IMR-90 (cell line): ENCODE measurements at regions of chr5 and their contacts with region 1.

Region 1: DNA sequence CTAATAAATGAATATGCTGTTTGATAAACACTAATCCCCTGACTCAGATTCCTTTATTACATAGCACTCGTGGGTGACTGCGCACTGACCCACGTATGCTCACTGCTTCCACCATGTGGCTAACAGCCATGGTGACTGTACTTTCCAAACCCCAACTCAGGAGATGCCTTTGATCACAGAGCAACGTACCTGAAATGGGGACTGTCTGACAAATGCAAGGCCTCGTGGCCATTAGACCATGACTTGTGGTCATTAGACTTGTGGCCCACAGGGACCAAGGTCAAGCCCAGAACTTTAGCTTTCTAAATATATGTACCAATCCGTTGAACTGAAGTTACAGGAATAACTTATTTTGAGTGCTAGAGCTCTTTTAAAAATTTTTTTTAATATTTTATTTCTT is 46.6 kb downstream of the CYFIP2 start:
- DNase-seq: peak; percentile 72
- ATAC-seq: peak; percentile 98
- H3K4me3 ChIP-seq: no peak overlapping the region
- H3K27ac ChIP-seq: no peak overlapping the region
- H3K4me1 ChIP-seq: no peaks in the 10 kb centered on the region
- H3K27me3 ChIP-seq: no peaks in the 10 kb centered on the region; the same call in none of the 2 replicates
- CTCF ChIP-seq: peak; percentile 76
- POLR2A ChIP-seq: no peak
- RAD21 ChIP-seq: peak; percentile 68

Region 2: DNA sequence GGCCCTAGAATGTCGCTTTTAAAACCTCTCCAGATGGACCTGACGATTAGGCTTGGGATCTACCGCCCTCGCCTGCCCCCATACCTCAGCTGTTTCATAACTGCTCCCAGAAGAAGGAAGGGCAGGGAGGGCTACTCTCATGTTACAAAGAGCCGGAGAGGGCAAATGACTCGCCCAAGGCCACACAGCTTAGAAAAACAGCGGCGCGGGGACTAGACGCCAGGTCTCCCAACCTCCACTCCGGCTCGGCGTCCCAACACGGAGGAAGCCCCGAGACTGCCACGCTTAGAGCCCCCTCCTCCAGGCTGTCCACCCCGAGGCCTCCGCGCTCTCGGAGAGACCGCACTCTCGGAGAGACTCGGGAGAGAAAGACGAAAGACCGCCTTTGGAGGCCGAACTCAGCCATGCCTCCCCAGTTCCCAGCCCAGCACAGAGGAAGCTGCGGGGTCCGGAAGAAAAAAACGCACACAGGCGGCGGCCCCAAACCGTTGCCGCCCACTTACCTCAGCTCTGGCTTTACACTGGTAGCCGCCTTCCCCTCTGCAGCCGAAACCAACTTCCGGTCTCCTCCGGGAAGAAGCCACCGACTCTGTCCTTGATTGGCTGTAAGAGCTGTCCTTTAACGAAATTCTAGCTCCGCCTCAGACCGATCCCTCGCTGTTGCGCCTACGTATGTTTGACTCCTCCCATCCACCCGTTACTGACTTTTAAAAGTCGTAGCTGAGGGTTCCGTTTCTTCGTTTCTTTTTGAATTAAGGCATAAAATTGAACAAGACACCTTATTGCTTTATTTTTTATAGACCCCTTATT is 170.0 kb before region 1 on chr5 and contains the start of gene MED7:
- CTCF ChIA-PET with region 1: no interaction called
- POLR2A ChIA-PET with region 1: no interaction called
- dilution Hi-C with region 1: no loop called
- in situ Hi-C with region 1: loop called (anchors 10 kb)
- intact Hi-C with region 1: no loop called
- DNase-seq: peak; percentile 100
- ATAC-seq: peak; percentile 99
- H3K4me3 ChIP-seq: peak within 1 kb of the TSS; percentile 84
- H3K27ac ChIP-seq: peak within 1 kb of the TSS; percentile 87
- H3K4me1 ChIP-seq: no peaks in the 10 kb centered on the region
- H3K27me3 ChIP-seq: no peaks in the 10 kb centered on the region
- CTCF ChIP-seq: no peak
- POLR2A ChIP-seq: peak; percentile 79
- RAD21 ChIP-seq: no peak
- total RNA-seq, gene MED7: 8.6 and 13.9 TPM in 2 replicates

Region 3: DNA sequence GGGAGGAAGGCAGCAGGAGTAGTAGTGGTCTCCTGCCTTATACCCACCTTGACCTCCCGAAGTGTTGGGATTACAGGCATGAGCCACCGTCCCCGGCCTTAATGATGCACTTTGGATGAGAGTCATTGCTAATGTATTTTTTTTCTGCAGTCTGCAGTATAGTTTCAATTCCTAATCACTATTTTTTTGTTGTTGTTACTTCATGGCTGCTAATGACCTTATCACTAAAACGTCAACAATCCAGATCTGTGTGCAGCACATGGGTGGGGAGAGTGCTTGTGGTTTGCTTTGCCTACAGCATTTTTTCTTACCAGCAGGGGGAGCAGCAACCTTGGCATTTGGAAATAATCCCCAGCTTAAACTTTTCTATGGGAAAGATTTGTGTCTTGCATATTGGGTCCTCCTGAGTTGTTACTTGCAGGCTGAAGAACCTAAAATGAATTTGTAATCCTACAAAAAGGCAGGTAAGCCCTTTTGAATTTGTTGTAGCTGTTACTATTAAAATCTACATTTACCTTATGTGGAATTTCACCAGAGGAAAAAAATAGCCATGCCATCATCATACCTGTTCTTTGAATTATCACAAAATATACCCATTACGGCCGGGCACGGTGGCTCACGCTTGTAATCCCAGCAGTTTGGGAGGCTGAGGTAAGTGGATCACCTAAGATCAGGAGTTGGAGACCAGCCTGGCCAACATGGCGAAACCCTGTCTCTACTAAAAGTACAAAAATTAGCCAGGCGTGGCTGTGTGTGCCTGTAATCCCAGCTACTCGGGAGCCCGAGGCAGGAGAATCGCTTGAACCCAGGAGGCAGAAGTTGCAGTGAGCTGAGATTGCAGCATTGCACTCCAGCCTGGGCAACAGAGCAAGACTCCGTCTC is 163.5 kb before region 1 on chr5:
- CTCF ChIA-PET with region 1: no interaction called
- POLR2A ChIA-PET with region 1: no interaction called
- dilution Hi-C with region 1: no loop called
- in situ Hi-C with region 1: loop called (anchors 10 kb)
- intact Hi-C with region 1: loop called (anchors 1 kb)
- DNase-seq: peak; percentile 60
- ATAC-seq: peak; percentile 93
- H3K4me3 ChIP-seq: no peak overlapping the region
- H3K27ac ChIP-seq: no peak overlapping the region
- H3K4me1 ChIP-seq: no peaks in the 10 kb centered on the region
- H3K27me3 ChIP-seq: no peaks in the 10 kb centered on the region; the same call in 1 of the 2 replicates
- CTCF ChIP-seq: peak; percentile 84
- POLR2A ChIP-seq: no peak
- RAD21 ChIP-seq: peak; percentile 68

Region 4: GRCh38 chr5:157253547-157253946 is 58.9 kb before region 1 on chr5:
- CTCF ChIA-PET with region 1: interaction called, 18 read pairs
- POLR2A ChIA-PET with region 1: no interaction called
- dilution Hi-C with region 1: no loop called
- in situ Hi-C with region 1: no loop called
- intact Hi-C with region 1: loop called (anchors 1 kb)
- DNase-seq: peak; percentile 47
- ATAC-seq: peak; percentile 96
- H3K4me3 ChIP-seq: no peak overlapping the region
- H3K27ac ChIP-seq: no peak overlapping the region
- H3K4me1 ChIP-seq: no peaks in the 10 kb centered on the region; the same call in 1 of the 2 replicates
- H3K27me3 ChIP-seq: peaks cover 11% of the 10 kb centered on the region
- CTCF ChIP-seq: peak; percentile 93
- POLR2A ChIP-seq: no peak
- RAD21 ChIP-seq: peak; percentile 88